CD4-positive, alpha-beta memory T cell (primary cell): ENCODE measurements at regions of chr2 and their contacts with region 1.

Region 1: DNA sequence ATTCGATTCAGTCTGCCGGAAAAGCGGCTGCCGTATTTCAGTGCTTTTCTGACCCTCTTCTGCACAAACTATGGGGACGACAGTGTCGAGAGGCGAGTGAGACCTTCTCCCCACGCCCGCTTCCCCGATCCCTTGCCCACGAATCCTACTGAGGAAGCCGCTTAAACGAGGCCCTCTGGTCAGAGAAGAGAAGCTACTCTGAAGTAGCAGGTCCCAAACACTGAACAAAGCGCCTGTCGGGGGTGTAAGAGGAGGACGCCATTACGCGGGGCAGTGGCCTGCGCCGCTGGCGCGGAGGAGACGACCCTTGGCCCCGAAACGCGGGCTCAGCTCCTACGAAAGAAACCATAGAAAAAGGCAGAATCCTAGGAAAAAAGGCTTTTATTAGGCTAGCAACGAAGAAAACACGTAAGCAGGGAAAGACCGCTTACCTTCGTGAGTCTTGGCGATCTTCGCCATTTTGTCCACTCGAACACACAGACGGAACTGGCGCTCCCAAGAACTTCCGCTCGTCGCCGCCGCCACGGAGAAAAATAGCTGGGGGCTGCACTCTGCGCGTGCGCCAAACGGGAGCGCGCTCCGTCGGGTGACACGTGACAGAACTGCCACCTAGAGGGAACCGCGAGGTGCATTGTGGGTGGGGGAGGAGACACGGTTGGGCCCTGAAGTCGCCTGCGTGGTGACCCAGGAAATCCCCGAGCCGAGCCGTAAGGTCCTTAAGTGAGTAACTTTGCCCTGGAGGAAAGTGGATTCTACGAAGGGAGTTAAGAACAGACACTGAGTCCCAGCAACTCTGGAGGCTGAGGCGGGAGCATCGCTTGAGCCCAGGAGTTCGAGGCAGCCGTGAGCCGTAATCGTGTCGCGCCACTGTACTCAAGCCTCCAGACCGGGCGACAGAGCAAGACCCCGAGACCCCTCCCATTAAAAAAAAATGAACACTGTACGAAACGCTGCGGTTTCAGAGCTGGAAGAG is at the start of gene SF3B1:
- DNase-seq: peak; percentile 99 to 100 (median 99)
- H3K4me3 ChIP-seq: peak within 1 kb of the TSS; percentile 89 to 95
- H3K4me3 Mint-ChIP-seq: peak within 1 kb of the TSS; percentile 98 to 100 (median 100)
- H3K27ac ChIP-seq: peak within 1 kb of the TSS; percentile 99
- H3K27ac Mint-ChIP-seq: peak within 1 kb of the TSS; percentile 99 to 100 (median 100)
- H3K4me1 ChIP-seq: peaks cover 51% of the 10 kb centered on the region
- H3K4me1 Mint-ChIP-seq: peaks cover 36 to 65% (median 49%) of the 10 kb centered on the region in 4 donors
- H3K27me3 ChIP-seq: no peaks in the 10 kb centered on the region
- H3K27me3 Mint-ChIP-seq: no peaks in the 10 kb centered on the region
- total RNA-seq, gene SF3B1: 601 to 604 TPM

Region 2: DNA sequence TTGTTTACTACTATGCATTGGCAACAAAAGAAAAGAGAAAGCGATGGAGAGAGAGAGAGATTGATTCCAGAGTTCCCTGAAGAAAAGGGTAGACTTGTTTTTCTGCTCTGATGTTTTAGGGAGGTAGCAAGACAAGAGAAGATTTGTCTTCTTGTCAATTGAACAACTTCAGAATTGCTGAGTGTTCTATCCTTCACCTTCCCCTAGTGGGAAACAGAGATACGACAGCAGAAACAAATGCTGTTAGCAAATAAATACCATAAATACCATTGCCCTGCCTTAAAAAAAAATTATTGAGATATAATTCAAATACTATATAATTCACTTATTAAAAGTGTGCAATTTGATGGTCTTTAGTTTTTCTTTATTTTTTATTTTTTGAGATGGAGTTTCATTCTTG is 821.5 kb before region 1 on chr2:
- CTCF ChIA-PET with region 1: no interaction called
- POLR2A ChIA-PET with region 1: no interaction called
- intact Hi-C with region 1: no loop called
- DNase-seq: no peak
- H3K4me3 ChIP-seq: no peak overlapping the region
- H3K4me3 Mint-ChIP-seq: no peak overlapping the region
- H3K27ac ChIP-seq: no peak overlapping the region
- H3K27ac Mint-ChIP-seq: no peak overlapping the region
- H3K4me1 ChIP-seq: no peaks in the 10 kb centered on the region
- H3K4me1 Mint-ChIP-seq: no peaks in the 10 kb centered on the region
- H3K27me3 ChIP-seq: no peaks in the 10 kb centered on the region
- H3K27me3 Mint-ChIP-seq: peaks cover 0 to 4% of the 10 kb centered on the region in 2 donors

Region 3: GRCh38 chr2:196639180-196640030 is 795.4 kb before region 1 on chr2 and contains the start of gene CCDC150:
- CTCF ChIA-PET with region 1: no interaction called
- POLR2A ChIA-PET with region 1: no interaction called
- intact Hi-C with region 1: loop called (anchors 5 kb)
- DNase-seq: peak; percentile 92 to 94 (median 94)
- H3K4me3 ChIP-seq: peak within 1 kb of the TSS; percentile 69 to 79
- H3K4me3 Mint-ChIP-seq: peak within 1 kb of the TSS; percentile 83 to 93 (median 90)
- H3K27ac ChIP-seq: peak within 1 kb of the TSS; percentile 39
- H3K27ac Mint-ChIP-seq: peak within 1 kb of the TSS; percentile 39 to 87 (median 72)
- H3K4me1 ChIP-seq: peaks cover 9% of the 10 kb centered on the region
- H3K4me1 Mint-ChIP-seq: peaks cover 8 to 20% (median 13%) of the 10 kb centered on the region in 4 donors
- H3K27me3 ChIP-seq: no peaks in the 10 kb centered on the region
- H3K27me3 Mint-ChIP-seq: peaks cover 0 to 4% of the 10 kb centered on the region in 2 donors
- total RNA-seq, gene CCDC150: 0.44 to 0.87 TPM

Region 4: GRCh38 chr2:197453161-197453914 is 18.5 kb after region 1 on chr2 and contains the start of gene COQ10B:
- CTCF ChIA-PET with region 1: interaction called, 22 read pairs
- POLR2A ChIA-PET with region 1: interaction called, 187 read pairs
- intact Hi-C with region 1: loop called (anchors 1 kb)
- DNase-seq: peak; percentile 97 to 99 (median 99)
- H3K4me3 ChIP-seq: peak within 1 kb of the TSS; percentile 87 to 88
- H3K4me3 Mint-ChIP-seq: peak within 1 kb of the TSS; percentile 96 to 100 (median 99)
- H3K27ac ChIP-seq: peak within 1 kb of the TSS; percentile 99
- H3K27ac Mint-ChIP-seq: peak within 1 kb of the TSS; percentile 99 to 100 (median 100)
- H3K4me1 ChIP-seq: peaks cover 36% of the 10 kb centered on the region
- H3K4me1 Mint-ChIP-seq: peaks cover 28 to 65% (median 41%) of the 10 kb centered on the region in 4 donors
- H3K27me3 ChIP-seq: no peaks in the 10 kb centered on the region
- H3K27me3 Mint-ChIP-seq: peaks cover 2 to 3% of the 10 kb centered on the region in 2 donors
- total RNA-seq, gene COQ10B: 31.7 to 33.1 TPM

Region 5: GRCh38 chr2:197515739-197516392 is 81.0 kb after region 1 on chr2 and contains the start of gene MOB4:
- CTCF ChIA-PET with region 1: no interaction called
- POLR2A ChIA-PET with region 1: interaction called, 49 read pairs
- intact Hi-C with region 1: loop called (anchors 1 kb)
- DNase-seq: peak; percentile 92 to 94 (median 93)
- H3K4me3 ChIP-seq: peak within 1 kb of the TSS; percentile 88 to 93
- H3K4me3 Mint-ChIP-seq: peak within 1 kb of the TSS; percentile 86 to 99 (median 94)
- H3K27ac ChIP-seq: peak within 1 kb of the TSS; percentile 95
- H3K27ac Mint-ChIP-seq: peak within 1 kb of the TSS; percentile 92 to 98 (median 97)
- H3K4me1 ChIP-seq: peaks cover 33% of the 10 kb centered on the region
- H3K4me1 Mint-ChIP-seq: peaks cover 18 to 59% (median 33%) of the 10 kb centered on the region in 4 donors
- H3K27me3 ChIP-seq: no peaks in the 10 kb centered on the region
- H3K27me3 Mint-ChIP-seq: no peaks in the 10 kb centered on the region
- total RNA-seq, gene MOB4: 20.2 to 21.8 TPM

Region 6: DNA sequence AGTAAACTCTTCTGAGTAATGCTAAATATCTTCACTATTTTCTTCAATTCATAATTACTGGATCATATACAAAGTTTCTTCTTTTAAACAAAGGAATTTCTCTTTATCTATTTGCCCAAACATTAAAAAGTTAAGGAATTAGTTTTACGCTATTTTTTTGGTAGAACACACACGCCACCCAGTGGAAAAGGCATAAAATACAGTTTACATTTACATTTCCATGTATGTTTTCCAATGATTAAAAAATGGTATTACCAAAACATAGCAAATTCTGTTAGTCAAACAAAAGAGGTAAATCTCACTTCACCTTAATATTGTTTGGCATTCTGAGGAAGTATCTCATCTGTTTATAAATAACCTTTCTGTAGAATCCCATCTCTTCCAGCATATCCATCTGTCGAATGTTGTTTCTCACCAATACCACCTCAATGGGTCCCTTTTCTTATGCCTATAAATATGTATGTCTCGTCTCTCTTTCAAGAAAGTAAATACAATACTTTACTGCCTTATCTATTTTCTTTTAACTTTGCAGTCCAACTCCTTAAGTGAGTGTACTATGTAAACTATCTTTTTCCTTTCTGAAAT is 343.1 kb after region 1 on chr2:
- CTCF ChIA-PET with region 1: no interaction called
- POLR2A ChIA-PET with region 1: no interaction called
- intact Hi-C with region 1: loop called (anchors 10 kb)
- DNase-seq: peak in 4 of 5 donors; percentile 32 to 46 (median 40)
- H3K4me3 ChIP-seq: no peak overlapping the region
- H3K4me3 Mint-ChIP-seq: no peak overlapping the region
- H3K27ac ChIP-seq: no peak overlapping the region
- H3K27ac Mint-ChIP-seq: no peak overlapping the region
- H3K4me1 ChIP-seq: no peaks in the 10 kb centered on the region
- H3K4me1 Mint-ChIP-seq: peaks cover 0 to 2% (median 0%) of the 10 kb centered on the region in 4 donors
- H3K27me3 ChIP-seq: no peaks in the 10 kb centered on the region
- H3K27me3 Mint-ChIP-seq: peaks cover 4 to 5% of the 10 kb centered on the region in 2 donors